Naive thymus-derived CD4-positive, alpha-beta T cell (primary cell): ENCODE measurements at regions of chr5 and their contacts with region 1.

Region 1: GRCh38 chr5:158695595-158696330 is 404.0 kb downstream of the EBF1 start:
- DNase-seq: peak; percentile 29 to 75 (median 60)
- ATAC-seq: peak; percentile 91
- H3K4me3 ChIP-seq: no peak overlapping the region
- H3K4me3 Mint-ChIP-seq: peak overlapping the region in 6 of 10 donors; percentile 8 to 57 (median 37)
- H3K27ac ChIP-seq: no peak overlapping the region
- H3K27ac Mint-ChIP-seq: no peak overlapping the region
- H3K4me1 ChIP-seq: no peaks in the 10 kb centered on the region
- H3K4me1 Mint-ChIP-seq: peaks cover 0 to 4% (median 2%) of the 10 kb centered on the region in 7 donors
- H3K27me3 ChIP-seq: no peaks in the 10 kb centered on the region
- H3K27me3 Mint-ChIP-seq: peaks cover 0 to 20% (median 0%) of the 10 kb centered on the region in 5 donors

Region 2: GRCh38 chr5:158074992-158075769 is 620.6 kb before region 1 on chr5:
- CTCF ChIA-PET with region 1: interaction called, 7 read pairs
- POLR2A ChIA-PET with region 1: no interaction called
- intact Hi-C with region 1: loop called in 1 of 2 experiments (anchors 2 kb)
- DNase-seq: peak; percentile 7 to 63 (median 42)
- ATAC-seq: peak; percentile 83
- H3K4me3 ChIP-seq: no peak overlapping the region
- H3K4me3 Mint-ChIP-seq: peak overlapping the region in 3 of 10 donors; percentile 9 to 38 (median 37)
- H3K27ac ChIP-seq: no peak overlapping the region
- H3K27ac Mint-ChIP-seq: peak overlapping the region in 4 of 9 donors; percentile 39 to 61 (median 42)
- H3K4me1 ChIP-seq: no peaks in the 10 kb centered on the region
- H3K4me1 Mint-ChIP-seq: peaks cover 0 to 5% (median 4%) of the 10 kb centered on the region in 7 donors
- H3K27me3 ChIP-seq: no peaks in the 10 kb centered on the region
- H3K27me3 Mint-ChIP-seq: peaks cover 0 to 27% (median 10%) of the 10 kb centered on the region in 5 donors

Region 3: GRCh38 chr5:158640593-158640980 is 55.2 kb before region 1 on chr5:
- CTCF ChIA-PET with region 1: no interaction called
- POLR2A ChIA-PET with region 1: no interaction called
- intact Hi-C with region 1: no loop called
- DNase-seq: no peak
- ATAC-seq: no peak
- H3K4me3 ChIP-seq: no peak overlapping the region
- H3K4me3 Mint-ChIP-seq: no peak overlapping the region
- H3K27ac ChIP-seq: no peak overlapping the region
- H3K27ac Mint-ChIP-seq: no peak overlapping the region
- H3K4me1 ChIP-seq: no peaks in the 10 kb centered on the region
- H3K4me1 Mint-ChIP-seq: no peaks in the 10 kb centered on the region
- H3K27me3 ChIP-seq: no peaks in the 10 kb centered on the region
- H3K27me3 Mint-ChIP-seq: no peaks in the 10 kb centered on the region

Region 4: DNA sequence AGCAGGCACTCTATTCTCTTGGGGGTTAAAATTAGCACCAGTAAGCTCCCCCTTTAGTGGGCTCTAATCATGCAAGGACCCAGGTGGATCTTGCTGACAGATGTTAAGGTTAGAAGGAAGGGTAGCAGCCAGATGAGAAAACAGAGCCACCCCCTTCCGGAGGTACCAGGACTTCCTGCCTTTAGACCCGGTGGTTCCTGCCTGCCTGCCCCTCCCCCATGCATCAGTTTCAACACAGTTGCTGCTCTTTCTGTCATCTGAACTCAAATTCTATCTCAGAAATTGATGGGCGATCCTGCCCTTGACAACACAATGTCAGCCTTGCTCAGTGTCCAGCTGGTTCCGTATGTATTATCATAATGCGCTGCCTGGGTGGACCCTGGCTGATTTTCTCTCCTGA is 116.6 kb after region 1 on chr5:
- CTCF ChIA-PET with region 1: interaction called, 4 read pairs
- POLR2A ChIA-PET with region 1: no interaction called
- intact Hi-C with region 1: loop called in 1 of 2 experiments (anchors 1 kb)
- DNase-seq: peak; percentile 13 to 83 (median 72)
- ATAC-seq: peak; percentile 75
- H3K4me3 ChIP-seq: peak overlapping the region; percentile 26
- H3K4me3 Mint-ChIP-seq: peak overlapping the region; percentile 39 to 81 (median 70)
- H3K27ac ChIP-seq: peak overlapping the region; percentile 42
- H3K27ac Mint-ChIP-seq: peak overlapping the region; percentile 60 to 88 (median 82)
- H3K4me1 ChIP-seq: peaks cover 11 to 25% of the 10 kb centered on the region in 2 donors
- H3K4me1 Mint-ChIP-seq: peaks cover 22 to 70% (median 52%) of the 10 kb centered on the region in 7 donors
- H3K27me3 ChIP-seq: no peaks in the 10 kb centered on the region
- H3K27me3 Mint-ChIP-seq: peaks cover 0 to 7% (median 0%) of the 10 kb centered on the region in 5 donors

Region 5: GRCh38 chr5:159049844-159050315 is 354.1 kb after region 1 on chr5:
- CTCF ChIA-PET with region 1: interaction called, 4 read pairs
- POLR2A ChIA-PET with region 1: no interaction called
- intact Hi-C with region 1: loop called in 1 of 2 experiments (anchors 1 kb)
- DNase-seq: no peak
- ATAC-seq: no peak
- H3K4me3 ChIP-seq: no peak overlapping the region
- H3K4me3 Mint-ChIP-seq: peak overlapping the region in 6 of 10 donors; percentile 15 to 72 (median 36)
- H3K27ac ChIP-seq: no peak overlapping the region
- H3K27ac Mint-ChIP-seq: no peak overlapping the region
- H3K4me1 ChIP-seq: peaks cover 0 to 3% of the 10 kb centered on the region in 2 donors
- H3K4me1 Mint-ChIP-seq: peaks cover 4 to 21% (median 11%) of the 10 kb centered on the region in 7 donors
- H3K27me3 ChIP-seq: no peaks in the 10 kb centered on the region
- H3K27me3 Mint-ChIP-seq: peaks cover 70 to 84% (median 79%) of the 10 kb centered on the region in 5 donors

Region 6: GRCh38 chr5:159112436-159112835 is 416.7 kb after region 1 on chr5:
- CTCF ChIA-PET with region 1: interaction called, 246 read pairs
- POLR2A ChIA-PET with region 1: interaction called, 23 read pairs
- intact Hi-C with region 1: loop called in 1 of 2 experiments (anchors 1 kb)
- DNase-seq: no peak
- ATAC-seq: no peak
- H3K4me3 ChIP-seq: no peak overlapping the region
- H3K4me3 Mint-ChIP-seq: no peak overlapping the region
- H3K27ac ChIP-seq: no peak overlapping the region
- H3K27ac Mint-ChIP-seq: no peak overlapping the region
- H3K4me1 ChIP-seq: no peaks in the 10 kb centered on the region
- H3K4me1 Mint-ChIP-seq: no peaks in the 10 kb centered on the region
- H3K27me3 ChIP-seq: peaks cover 0 to 2% of the 10 kb centered on the region in 2 donors
- H3K27me3 Mint-ChIP-seq: peaks cover 4 to 56% (median 19%) of the 10 kb centered on the region in 5 donors

Region 7: DNA sequence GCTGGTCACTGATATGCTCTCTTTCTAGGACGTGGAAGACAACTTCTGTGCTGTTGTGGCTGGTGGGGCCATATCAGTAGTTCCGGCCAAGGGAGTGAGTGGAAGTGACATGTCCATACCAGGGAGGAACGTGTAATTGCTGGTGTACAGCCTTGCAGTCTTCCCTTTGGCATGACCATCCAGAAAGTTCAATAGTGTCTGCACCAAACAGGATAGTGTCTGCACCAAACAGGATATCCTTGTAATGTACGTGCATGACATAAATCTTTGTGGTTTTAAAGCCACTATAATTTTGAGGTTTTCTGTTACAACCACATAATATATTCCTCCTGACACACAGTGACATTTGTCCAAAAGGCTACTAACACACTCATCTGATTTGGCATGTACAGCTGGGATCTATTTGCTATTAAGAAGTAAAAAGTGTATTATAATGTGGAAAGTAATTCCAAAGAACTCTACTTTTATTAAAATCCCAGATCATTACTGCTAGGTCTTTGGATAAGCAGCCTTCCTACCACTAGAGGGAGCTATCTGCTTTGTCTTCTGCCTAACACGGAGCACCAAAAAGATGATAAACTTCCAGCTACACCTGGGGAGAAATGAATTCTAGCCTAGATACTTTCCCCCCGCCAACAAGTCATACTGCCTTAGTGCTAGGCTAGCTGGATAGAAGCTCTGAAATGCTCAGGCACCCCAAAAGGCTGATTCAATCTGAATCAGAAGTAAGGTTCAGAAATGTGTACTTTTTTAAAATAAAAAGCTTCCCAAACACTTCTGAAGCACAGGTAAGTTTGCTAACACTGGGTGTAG is 460.9 kb after region 1 on chr5:
- CTCF ChIA-PET with region 1: no interaction called
- POLR2A ChIA-PET with region 1: no interaction called
- intact Hi-C with region 1: no loop called
- DNase-seq: peak in 7 of 9 donors; percentile 53 to 77 (median 72)
- ATAC-seq: peak; percentile 89
- H3K4me3 ChIP-seq: no peak overlapping the region
- H3K4me3 Mint-ChIP-seq: peak overlapping the region in 1 of 10 donors; percentile 50
- H3K27ac ChIP-seq: peak overlapping the region; percentile 16
- H3K27ac Mint-ChIP-seq: peak overlapping the region; percentile 26 to 92 (median 85)
- H3K4me1 ChIP-seq: peaks cover 8 to 9% of the 10 kb centered on the region in 2 donors
- H3K4me1 Mint-ChIP-seq: peaks cover 0 to 35% (median 23%) of the 10 kb centered on the region in 7 donors
- H3K27me3 ChIP-seq: no peaks in the 10 kb centered on the region
- H3K27me3 Mint-ChIP-seq: no peaks in the 10 kb centered on the region